K562 (cell line): ENCODE measurements at regions of chr4 and their contacts with region 1.

Region 1: GRCh38 chr4:127586922-127587571 is 45.7 kb upstream of the INTU start:
- DNase-seq: peak; percentile 42 to 76 (median 56)
- ATAC-seq: peak; percentile 99
- H3K4me3 ChIP-seq: no peak overlapping the region
- H3K27ac ChIP-seq: no peak overlapping the region
- H3K4me1 ChIP-seq: 0 out of 5 replicates have a peak, but pooled peaks cover 0 to 3% of the 10 kb centered on the region in 2 experiments
- H3K27me3 ChIP-seq: peaks cover 0 to 3% of the 10 kb centered on the region in 2 experiments; a peak in 1 of 5 replicates
- CTCF ChIP-seq: peak; percentile 74 to 82 (median 77)
- EP300 ChIP-seq: no peak
- POLR2A ChIP-seq: no peak
- RAD21 ChIP-seq: peak; percentile 49 to 79; a peak in 3 of 4 replicates

Region 2: DNA sequence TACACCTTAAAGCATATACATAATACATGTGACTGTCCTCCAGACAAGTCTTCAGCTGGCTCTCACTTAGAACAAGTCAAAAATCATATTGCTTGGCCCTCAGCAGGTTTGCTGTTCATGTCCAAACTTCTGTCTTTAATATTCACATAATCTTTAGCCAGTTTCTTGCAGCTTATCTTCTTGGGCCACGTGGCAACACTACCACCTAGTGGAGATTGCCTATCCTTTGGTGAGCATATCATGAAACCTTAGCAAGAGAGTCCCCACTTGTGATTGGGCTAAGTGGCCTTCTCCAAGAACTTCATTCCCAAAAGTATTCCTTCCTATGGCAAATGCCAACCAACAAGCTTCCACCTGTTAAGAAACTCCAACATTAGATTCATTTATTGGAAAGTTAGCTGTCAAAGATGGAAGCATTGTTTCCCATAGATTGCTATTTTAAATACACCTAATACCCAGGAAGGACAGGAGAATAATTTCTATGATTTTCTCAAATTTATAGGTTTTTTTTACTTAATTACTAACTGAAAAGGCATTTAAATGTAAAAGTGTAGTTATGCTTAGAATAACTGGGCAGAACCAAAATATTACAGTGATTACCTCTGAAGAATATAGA is 186.2 kb before region 1 on chr4:
- CTCF ChIA-PET with region 1: no interaction called
- POLR2A ChIA-PET with region 1: no interaction called
- in situ Hi-C with region 1: no loop called
- intact Hi-C with region 1: loop called (anchors 5 kb)
- DNase-seq: peak; percentile 41 to 80 (median 52)
- ATAC-seq: peak; percentile 93
- H3K4me3 ChIP-seq: no peak overlapping the region
- H3K27ac ChIP-seq: no peak overlapping the region
- H3K4me1 ChIP-seq: no peaks in the 10 kb centered on the region
- H3K27me3 ChIP-seq: peaks cover 0 to 4% of the 10 kb centered on the region in 2 experiments; a peak in 1 of 5 replicates
- CTCF ChIP-seq: peak; percentile 74 to 85 (median 75)
- EP300 ChIP-seq: no peak
- POLR2A ChIP-seq: no peak
- RAD21 ChIP-seq: peak; percentile 82 to 89

Region 3: GRCh38 chr4:127479031-127479622 is 107.9 kb before region 1 on chr4:
- CTCF ChIA-PET with region 1: no interaction called
- POLR2A ChIA-PET with region 1: no interaction called
- in situ Hi-C with region 1: no loop called
- intact Hi-C with region 1: loop called (anchors 2 kb)
- DNase-seq: peak; percentile 12 to 54 (median 18)
- ATAC-seq: 0 out of 3 replicates have a peak, but pooled peaks have one; percentile 47
- H3K4me3 ChIP-seq: no peak overlapping the region
- H3K27ac ChIP-seq: no peak overlapping the region
- H3K4me1 ChIP-seq: no peaks in the 10 kb centered on the region
- H3K27me3 ChIP-seq: no peaks in the 10 kb centered on the region
- CTCF ChIP-seq: peak; percentile 25 to 67 (median 39); a peak in 4 of 6 replicates
- EP300 ChIP-seq: no peak
- POLR2A ChIP-seq: no peak
- RAD21 ChIP-seq: peak; percentile 61 to 69